ENCODE measurements at regions of chr1 and their contacts with region 1.

Region 1: GRCh38 chr1:192477630-192478029 is 97.9 kb upstream of the RGS1 start:
- DNase-seq: no peak
- ATAC-seq: peak; percentile 75 to 91 (median 86)
- H3K4me3 ChIP-seq: no peak overlapping the region
- H3K27ac ChIP-seq: no peak overlapping the region
- H3K4me1 ChIP-seq: no peaks in the 10 kb centered on the region
- H3K27me3 ChIP-seq: no peaks in the 10 kb centered on the region
- CTCF ChIP-seq: peak in 3 of 4 donors; percentile 26 to 37 (median 29)

Region 2: GRCh38 chr1:192225703-192226102 is 251.9 kb before region 1 on chr1:
- intact Hi-C with region 1: no loop called
- DNase-seq: no peak
- ATAC-seq: no peak
- H3K4me3 ChIP-seq: no peak overlapping the region
- H3K27ac ChIP-seq: no peak overlapping the region
- H3K4me1 ChIP-seq: no peaks in the 10 kb centered on the region
- H3K27me3 ChIP-seq: no peaks in the 10 kb centered on the region
- CTCF ChIP-seq: no peak

Region 3: GRCh38 chr1:192550922-192551534 is 73.4 kb after region 1 on chr1:
- intact Hi-C with region 1: no loop called
- DNase-seq: no peak
- ATAC-seq: peak in 2 of 4 donors; percentile 60 to 70
- H3K4me3 ChIP-seq: no peak overlapping the region
- H3K27ac ChIP-seq: no peak overlapping the region
- H3K4me1 ChIP-seq: peaks cover 0 to 8% (median 0%) of the 10 kb centered on the region in 3 donors
- H3K27me3 ChIP-seq: no peaks in the 10 kb centered on the region
- CTCF ChIP-seq: no peak

Region 4: DNA sequence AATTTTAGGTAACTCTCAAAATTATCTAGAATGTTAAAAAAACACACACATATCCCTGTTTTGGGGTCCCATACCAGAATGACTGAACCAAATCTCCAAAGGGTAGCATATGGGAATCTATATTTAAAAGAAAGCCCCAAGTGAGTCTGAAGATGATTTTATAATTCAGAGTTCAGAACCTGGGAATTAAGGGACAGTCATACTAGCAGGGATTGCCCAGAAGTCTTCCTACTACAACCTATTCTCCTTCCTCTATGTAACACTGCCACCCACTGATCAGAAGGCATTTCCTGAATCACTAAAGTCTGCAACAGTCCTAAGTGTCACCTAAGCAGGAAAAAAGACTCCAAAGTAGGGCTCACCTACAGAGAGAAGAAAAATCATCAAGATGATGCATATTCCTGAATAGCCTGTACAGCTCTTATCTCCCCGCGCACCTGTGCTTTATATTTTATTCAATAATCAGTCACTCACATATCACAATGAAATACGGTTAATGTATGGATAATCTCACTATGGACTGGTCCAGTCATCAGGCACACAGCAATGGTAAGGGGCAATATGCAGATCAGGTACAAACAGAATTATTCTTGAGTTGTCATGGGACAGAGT is 102.8 kb after region 1 on chr1:
- intact Hi-C with region 1: loop called in 1 of 3 experiments (anchors 5 kb)
- DNase-seq: peak in 2 of 6 donors; percentile 32 to 44
- ATAC-seq: peak; percentile 76 to 95 (median 88)
- H3K4me3 ChIP-seq: no peak overlapping the region
- H3K27ac ChIP-seq: no peak overlapping the region
- H3K4me1 ChIP-seq: no peaks in the 10 kb centered on the region
- H3K27me3 ChIP-seq: no peaks in the 10 kb centered on the region
- CTCF ChIP-seq: peak in 3 of 4 donors; percentile 20 to 33 (median 23)

Region 5: GRCh38 chr1:192609110-192610079 is 131.8 kb after region 1 on chr1:
- intact Hi-C with region 1: loop called in 1 of 3 experiments (anchors 5 kb)
- DNase-seq: peak in 2 of 6 donors; percentile 20 to 60
- ATAC-seq: peak in 3 of 4 donors; percentile 39 to 87 (median 76)
- H3K4me3 ChIP-seq: no peak overlapping the region
- H3K27ac ChIP-seq: no peak overlapping the region
- H3K4me1 ChIP-seq: peaks cover 0 to 6% (median 0%) of the 10 kb centered on the region in 3 donors
- H3K27me3 ChIP-seq: no peaks in the 10 kb centered on the region
- CTCF ChIP-seq: no peak

Measured in pancreas (tissue), 10 donors.